Posterior vena cava (tissue), 2 donors: ENCODE measurements at regions of chr9 and their contacts with region 1.

Region 1: GRCh38 chr9:129665389-129665775 is at the start of gene PRRX2:
- DNase-seq: peak; percentile 93
- total RNA-seq, gene PRRX2: 20.8 to 22.9 TPM

Region 2: DNA sequence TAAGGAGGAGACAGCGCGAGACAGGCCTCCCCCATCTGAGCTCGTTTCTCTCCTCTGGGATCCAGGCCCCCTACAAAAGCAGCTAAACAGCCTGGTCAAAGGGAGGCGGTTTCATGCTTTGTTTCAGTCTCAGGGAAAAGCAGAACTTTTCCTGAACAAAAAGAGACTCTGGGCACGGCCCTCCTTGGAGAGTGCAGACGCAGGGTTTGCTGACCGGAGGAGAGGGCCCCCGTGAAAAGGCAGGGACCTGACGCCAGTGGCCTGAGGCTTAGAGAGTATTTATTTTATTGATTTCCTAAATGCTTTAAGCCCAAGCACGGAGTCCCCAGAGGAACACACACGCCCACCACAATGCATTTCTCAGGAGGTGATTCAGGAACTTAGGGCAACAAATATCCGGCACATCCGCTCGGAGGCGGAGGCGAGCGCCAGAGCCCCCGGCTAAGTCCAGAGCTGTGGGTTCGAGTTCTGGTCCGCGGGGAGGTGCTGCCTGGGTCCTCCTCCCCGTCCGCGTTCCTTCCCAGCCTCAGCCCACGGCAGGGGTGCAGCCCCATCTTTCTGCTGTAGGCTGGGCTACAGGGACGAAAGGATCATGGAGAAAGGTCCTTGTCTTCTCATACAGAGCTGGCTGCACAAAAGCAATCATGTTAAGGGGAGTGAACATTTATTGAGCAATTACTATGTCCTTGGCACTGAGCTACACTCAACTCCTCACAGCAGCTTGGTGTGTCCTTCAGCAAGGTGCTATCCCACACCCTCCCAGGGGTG is 47.4 kb after region 1 on chr9:
- intact Hi-C with region 1: loop called in 1 of 2 experiments (anchors 10 kb)
- DNase-seq: no peak

Region 3: DNA sequence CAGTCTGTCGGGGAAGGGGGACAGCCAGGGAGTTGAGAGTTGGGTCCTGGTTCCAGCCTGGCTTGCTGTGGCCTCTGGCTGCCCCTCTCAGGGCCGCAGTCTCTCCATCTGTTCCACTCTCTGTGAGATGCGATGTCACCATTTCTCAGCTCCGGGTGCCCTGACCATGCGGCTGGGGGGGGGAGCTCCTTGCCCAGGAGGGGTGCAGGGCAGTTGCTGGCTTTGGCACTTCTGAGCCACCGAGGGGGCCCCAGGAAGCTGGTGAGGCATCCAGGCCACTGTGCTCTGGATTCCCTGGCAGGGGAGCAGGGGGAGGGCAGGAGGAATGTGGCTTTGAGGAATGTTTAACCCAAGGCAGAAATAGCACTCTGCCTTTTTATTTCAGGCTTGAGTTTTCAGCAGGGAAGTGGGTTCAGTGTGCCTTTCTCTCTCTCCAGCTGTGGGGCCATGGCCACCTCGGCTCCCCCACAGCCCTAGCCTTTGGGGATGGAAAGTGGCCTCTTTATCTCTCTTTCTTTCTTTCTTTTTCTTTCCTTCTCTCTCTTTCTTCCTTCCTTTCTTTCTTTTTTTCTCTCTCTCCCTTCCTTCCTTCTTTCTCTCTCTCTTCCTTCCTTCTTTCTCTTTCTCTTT is 517.9 kb after region 1 on chr9:
- intact Hi-C with region 1: no loop called
- DNase-seq: peak; percentile 85

Region 4: DNA sequence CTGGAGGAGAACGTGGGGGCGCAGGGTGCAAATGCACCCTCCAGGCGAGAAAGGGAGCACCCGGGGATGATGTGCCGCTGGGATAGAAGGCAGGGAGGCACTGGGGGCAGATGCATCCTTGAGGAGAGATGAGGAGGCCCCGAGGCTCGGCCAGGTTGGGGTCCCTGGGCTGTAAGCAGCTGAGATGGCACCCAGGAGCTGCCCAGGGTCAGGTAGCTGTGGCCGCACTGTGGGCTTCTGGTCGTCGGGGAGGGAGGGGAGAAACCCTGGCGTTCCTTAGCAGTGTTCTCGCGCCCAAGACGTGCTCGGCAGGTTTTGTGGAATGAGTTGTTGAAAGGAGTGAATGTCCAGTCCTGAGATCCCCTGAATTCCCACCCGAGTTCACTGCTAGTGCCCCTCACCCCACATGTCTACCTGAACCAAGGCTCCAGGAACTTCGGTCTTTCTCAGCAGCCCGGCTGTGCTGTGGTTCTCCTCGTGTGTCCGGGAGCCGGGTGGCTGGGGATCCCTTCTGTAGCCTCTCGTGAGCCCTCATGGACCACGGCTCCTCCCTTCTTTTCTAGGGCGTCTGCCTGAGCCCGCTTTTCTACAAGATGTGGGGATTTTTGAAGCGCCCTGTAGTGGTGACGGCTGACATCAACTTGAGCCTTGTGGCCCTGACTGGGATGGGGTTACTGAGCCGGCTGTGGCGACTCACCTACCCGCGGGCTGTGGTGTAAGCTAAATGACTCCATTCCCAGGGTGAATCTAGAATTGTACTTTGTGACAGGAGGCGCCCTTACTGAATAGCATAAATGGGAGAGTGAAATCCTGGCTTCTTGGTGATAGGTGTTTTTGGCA is 1838.5 kb after region 1 on chr9:
- intact Hi-C with region 1: no loop called
- DNase-seq: no peak